ENCODE measurements at regions of chr2 and their contacts with region 1.

Region 1: GRCh38 chr2:222860740-222861410 is at the start of gene ACSL3:
- DNase-seq: peak; percentile 97
- ATAC-seq: peak; percentile 99
- H3K4me3 Mint-ChIP-seq: peak within 1 kb of the TSS; percentile 66
- H3K27ac Mint-ChIP-seq: peak within 1 kb of the TSS; percentile 81
- H3K4me1 Mint-ChIP-seq: peaks cover 13% of the 10 kb centered on the region
- H3K27me3 Mint-ChIP-seq: peaks cover 19% of the 10 kb centered on the region
- total RNA-seq, gene ACSL3: 32.1 to 58.7 TPM

Region 2: DNA sequence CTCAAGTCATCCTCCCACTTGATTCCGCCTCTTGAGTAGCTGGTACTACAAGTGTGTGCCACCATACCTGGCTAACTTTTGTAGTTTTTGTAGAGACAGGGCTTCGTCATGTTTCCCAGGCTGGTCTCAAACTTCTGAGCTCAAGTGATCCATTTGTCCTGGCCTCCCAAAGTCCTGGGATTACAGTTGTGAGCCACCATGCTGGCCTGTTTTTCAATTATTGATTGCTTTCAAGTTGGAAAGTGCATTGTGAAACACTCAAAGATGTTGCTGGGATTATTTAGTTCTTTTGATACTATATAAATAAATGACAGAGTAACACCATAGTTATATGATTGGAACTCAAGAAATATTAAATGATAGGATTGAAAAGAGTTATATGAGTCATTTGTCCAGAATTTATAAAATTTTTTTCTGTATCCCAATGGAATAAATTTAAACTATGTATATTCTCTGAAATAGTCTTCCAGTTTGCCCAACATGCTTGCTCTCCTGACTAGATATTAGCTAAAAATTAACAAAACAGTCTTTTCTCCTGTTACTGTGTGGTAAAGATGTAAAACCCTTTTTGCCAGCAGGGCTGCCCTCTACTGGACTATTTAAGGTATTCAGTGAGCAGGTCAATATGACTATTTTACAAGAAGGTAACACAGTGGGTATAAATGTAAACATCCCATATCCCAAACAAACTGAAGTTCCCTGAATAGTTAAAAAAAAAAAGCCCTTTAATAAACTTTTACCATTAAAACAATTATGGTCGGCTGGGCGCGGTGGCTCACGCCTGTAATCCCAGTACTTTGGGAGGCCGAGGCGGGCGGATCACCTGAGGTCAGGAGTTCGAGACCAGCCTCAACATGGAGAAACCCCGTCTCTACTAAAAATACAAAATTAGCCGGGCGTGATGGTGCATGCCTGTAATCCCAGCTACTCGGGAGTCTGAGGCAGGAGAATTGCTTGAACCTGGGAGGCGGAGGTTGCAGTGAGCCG is 42.7 kb after region 1 on chr2:
- CTCF ChIA-PET with region 1: interaction called, 14 read pairs
- DNase-seq: no peak
- ATAC-seq: peak; percentile 70
- H3K4me3 Mint-ChIP-seq: no peak overlapping the region
- H3K27ac Mint-ChIP-seq: no peak overlapping the region
- H3K4me1 Mint-ChIP-seq: peaks cover 12% of the 10 kb centered on the region
- H3K27me3 Mint-ChIP-seq: no peaks in the 10 kb centered on the region

Measured in activated CD8-positive, alpha-beta memory T cell treated with anti-CD3 and anti-CD28 coated beads, Interleukin-2, amount 10 ng/mL, durations not matched to agents 7 days and 5 days (primary cell).